ENCODE measurements at regions of chr6 and their contacts with region 1.

Region 1: DNA sequence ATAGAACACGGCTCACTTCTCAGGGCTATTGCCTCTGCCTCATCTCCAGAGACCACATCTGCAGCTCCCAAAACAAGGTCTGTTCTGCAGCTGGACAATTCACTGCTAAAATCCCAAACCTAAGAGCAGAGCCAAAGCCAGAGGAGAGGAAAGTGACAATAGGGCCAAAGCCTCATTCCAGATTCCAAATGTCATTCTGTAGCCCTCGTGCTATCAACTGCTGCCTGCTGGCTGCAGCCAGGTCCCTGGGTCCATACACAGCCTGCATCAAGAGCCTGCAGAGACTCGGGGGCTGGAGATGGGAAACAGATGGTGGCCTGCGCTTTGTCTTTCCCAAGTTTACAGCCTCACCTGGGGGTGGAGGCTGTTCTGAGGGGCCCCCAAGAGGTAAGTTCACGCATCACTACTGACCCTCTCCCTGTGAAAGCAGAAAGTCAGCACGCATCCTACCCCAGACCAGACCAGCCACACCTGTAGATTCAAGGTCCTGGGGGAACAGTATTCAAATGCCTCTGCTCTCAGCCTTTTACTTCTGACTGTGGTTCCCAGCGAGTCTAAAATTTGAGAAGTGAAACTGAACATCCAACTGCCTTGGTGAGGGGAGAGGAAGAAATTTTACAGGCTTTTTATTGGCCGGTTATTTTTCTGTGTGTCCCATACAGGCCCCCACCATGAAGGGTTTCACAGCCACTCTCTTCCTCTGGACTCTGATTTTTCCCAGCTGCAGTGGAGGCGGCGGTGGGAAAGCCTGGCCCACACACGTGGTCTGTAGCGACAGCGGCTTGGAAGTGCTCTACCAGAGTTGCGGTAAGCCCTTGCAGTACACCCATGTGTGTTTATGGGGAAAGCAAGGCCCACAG is at the start of gene LY86:
- DNase-seq: peak; percentile 94
- H3K4me3 ChIP-seq: peak within 1 kb of the TSS; percentile 76
- H3K27ac ChIP-seq: peak within 1 kb of the TSS; percentile 96
- H3K4me1 ChIP-seq: peaks cover 78% of the 10 kb centered on the region
- CTCF ChIP-seq: peak; percentile 68
- total RNA-seq, gene LY86: 48.4 and 49.2 TPM in 2 replicates

Region 2: DNA sequence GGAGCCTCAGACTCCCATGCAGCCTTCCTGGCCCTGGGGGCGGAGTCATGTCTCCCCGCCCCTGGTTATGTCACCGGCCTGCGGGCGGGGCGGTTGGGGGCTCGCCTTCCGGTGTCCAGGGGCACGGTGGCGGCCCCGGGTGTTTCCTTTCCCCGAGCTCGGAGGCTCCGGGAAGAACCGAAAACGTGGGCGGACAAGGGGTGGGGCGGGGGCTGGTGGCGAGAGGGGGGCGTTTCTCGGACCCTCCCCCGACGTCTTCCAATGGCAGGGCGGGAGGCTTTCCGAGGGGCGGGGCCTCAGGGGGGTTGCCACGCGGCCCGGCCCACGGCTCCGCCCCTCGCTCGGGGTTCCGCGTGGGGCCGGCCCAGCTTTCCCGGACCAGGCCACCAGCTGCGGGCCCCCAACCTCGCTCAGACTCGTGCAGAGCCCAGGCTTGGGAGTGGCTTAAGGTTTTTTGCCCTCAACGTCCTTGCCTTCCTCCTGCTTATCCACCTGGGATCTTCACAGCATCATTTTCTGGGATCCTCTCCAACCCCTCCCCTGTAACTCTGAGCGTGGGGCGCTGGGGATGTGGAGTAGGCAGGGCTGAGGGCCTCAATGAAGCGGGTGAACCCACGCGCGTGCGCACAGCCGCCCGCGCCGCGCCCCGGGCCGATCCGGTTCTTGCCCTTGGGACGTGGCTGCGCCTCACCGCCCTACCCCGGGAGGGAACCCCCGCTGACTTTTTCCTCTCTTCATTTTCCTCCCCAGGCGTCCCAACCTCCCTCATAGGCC is 579.5 kb before region 1 on chr6:
- CTCF ChIA-PET with region 1: no interaction called
- POLR2A ChIA-PET with region 1: interaction called, 4 read pairs
- intact Hi-C with region 1: loop called (anchors 1 kb)
- DNase-seq: peak; percentile 95
- H3K4me3 ChIP-seq: peak overlapping the region; percentile 73
- H3K27ac ChIP-seq: peak overlapping the region; percentile 72
- H3K4me1 ChIP-seq: peaks cover 29% of the 10 kb centered on the region
- CTCF ChIP-seq: no peak

Region 3: DNA sequence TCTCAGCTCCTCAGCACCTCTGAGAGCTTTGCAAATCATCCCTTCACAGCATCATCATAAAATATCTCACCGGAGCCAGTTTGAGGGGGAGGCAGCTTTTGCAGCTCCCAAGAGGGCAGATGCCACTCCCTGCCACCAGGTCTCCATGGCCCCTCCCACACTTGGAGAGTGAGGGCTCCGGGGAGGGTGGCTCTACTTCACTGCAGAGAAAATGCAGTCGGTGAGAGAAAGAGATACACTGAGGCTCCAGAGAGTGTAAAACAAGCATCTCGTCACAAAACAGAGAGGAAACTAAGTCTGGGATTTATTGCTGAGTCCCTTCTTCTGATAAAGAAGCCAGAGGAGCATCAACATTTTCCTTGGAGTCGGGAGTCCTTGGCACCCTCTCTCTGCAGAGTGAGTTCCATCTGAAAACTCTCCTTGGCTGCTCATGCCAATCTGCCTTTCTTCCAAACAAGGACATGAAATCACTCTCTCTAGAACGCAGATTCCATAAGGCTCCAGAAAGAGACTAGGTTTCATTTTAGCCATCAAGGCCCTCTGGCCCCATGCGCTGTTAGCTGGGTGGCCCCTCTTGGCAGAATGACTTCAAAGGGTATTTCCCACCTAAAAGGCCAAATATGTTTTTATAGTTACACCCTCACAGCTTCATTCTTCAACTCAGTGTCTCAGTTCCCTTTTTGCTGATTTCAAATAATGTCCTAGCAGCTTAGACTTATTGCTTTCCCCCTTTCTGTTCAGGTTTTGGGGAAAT is 197.3 kb before region 1 on chr6:
- CTCF ChIA-PET with region 1: no interaction called
- POLR2A ChIA-PET with region 1: interaction called, 4 read pairs
- intact Hi-C with region 1: loop called (anchors 5 kb)
- DNase-seq: peak; percentile 90
- H3K4me3 ChIP-seq: peak overlapping the region; percentile 61
- H3K27ac ChIP-seq: peak overlapping the region; percentile 92
- H3K4me1 ChIP-seq: peaks cover 100% of the 10 kb centered on the region
- CTCF ChIP-seq: no peak

Region 4: GRCh38 chr6:6556738-6557505 is 31.4 kb before region 1 on chr6:
- CTCF ChIA-PET with region 1: interaction called, 3 read pairs
- POLR2A ChIA-PET with region 1: interaction called, 7 read pairs
- intact Hi-C with region 1: loop called (anchors 1 kb)
- DNase-seq: peak; percentile 74
- H3K4me3 ChIP-seq: no peak overlapping the region
- H3K27ac ChIP-seq: no peak overlapping the region
- H3K4me1 ChIP-seq: no peaks in the 10 kb centered on the region
- CTCF ChIP-seq: peak; percentile 99

Region 5: DNA sequence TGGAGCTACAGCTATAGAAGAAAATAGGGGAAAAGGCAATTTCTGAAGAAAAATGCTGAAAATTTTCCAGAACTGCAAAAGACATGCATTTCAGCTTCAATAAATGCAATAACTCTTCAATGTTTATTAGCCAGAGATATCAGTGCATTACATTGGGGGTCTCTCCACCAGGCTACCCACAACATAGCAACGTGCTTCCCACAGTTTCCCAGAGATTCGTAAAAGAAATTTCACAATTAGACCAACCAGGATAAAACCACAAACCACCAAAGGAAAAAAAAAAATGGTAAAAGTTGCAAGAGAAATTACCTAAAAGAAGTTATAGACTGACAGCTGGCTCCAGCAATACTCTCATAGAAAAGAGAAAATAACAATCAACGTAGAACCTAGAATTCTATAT is 16.3 kb after region 1 on chr6:
- CTCF ChIA-PET with region 1: interaction called, 6 read pairs
- POLR2A ChIA-PET with region 1: interaction called, 84 read pairs
- intact Hi-C with region 1: no loop called
- DNase-seq: no peak
- H3K4me3 ChIP-seq: no peak overlapping the region
- H3K27ac ChIP-seq: no peak overlapping the region
- H3K4me1 ChIP-seq: peaks cover 9% of the 10 kb centered on the region
- CTCF ChIP-seq: no peak

Region 6: GRCh38 chr6:6686748-6687601 is 98.7 kb after region 1 on chr6:
- CTCF ChIA-PET with region 1: no interaction called
- POLR2A ChIA-PET with region 1: interaction called, 4 read pairs
- intact Hi-C with region 1: loop called (anchors 1 kb)
- DNase-seq: peak; percentile 97
- H3K4me3 ChIP-seq: peak overlapping the region; percentile 82
- H3K27ac ChIP-seq: peak overlapping the region; percentile 12
- H3K4me1 ChIP-seq: peaks cover 26% of the 10 kb centered on the region
- CTCF ChIP-seq: no peak

Region 7: GRCh38 chr6:7910654-7911344 is 1322.5 kb after region 1 on chr6 and contains the start of gene TXNDC5:
- CTCF ChIA-PET with region 1: interaction called, 3 read pairs
- POLR2A ChIA-PET with region 1: no interaction called
- intact Hi-C with region 1: loop called (anchors 10 kb)
- DNase-seq: peak; percentile 75
- H3K4me3 ChIP-seq: peak within 1 kb of the TSS; percentile 92
- H3K27ac ChIP-seq: peak within 1 kb of the TSS; percentile 96
- H3K4me1 ChIP-seq: peaks cover 78% of the 10 kb centered on the region
- CTCF ChIP-seq: no peak
- total RNA-seq, gene TXNDC5: 280 and 319 TPM in 2 replicates

Measured in OCI-LY7 (cell line).